Posterior cingulate gyrus (tissue), 11 donors: ENCODE measurements at regions of chr11 and their contacts with region 1.

Region 1: GRCh38 chr11:73787643-73788537 is at the start of gene MRPL48:
- DNase-seq: peak; percentile 78 to 97 (median 88)

Region 2: GRCh38 chr11:73876424-73877300 is 88.8 kb after region 1 on chr11 and contains the starts of genes COA4 and PAAF1:
- intact Hi-C with region 1: loop called (anchors 1 kb)
- DNase-seq: peak; percentile 89 to 99 (median 95)